Activated B cell treated with CpG ODN at 0.5 μM for 24 hours (primary cell): ENCODE measurements at regions of chr1 and their contacts with region 1.

Region 1: GRCh38 chr1:247475793-247476192 is 17.9 kb upstream of the OR2B11 start:
- DNase-seq: no peak
- ATAC-seq: no peak
- H3K4me3 Mint-ChIP-seq: no peak overlapping the region
- H3K27ac Mint-ChIP-seq: peak overlapping the region; percentile 95
- H3K4me1 Mint-ChIP-seq: peaks cover 40% of the 10 kb centered on the region
- H3K27me3 Mint-ChIP-seq: no peaks in the 10 kb centered on the region
- CTCF ChIP-seq: no peak

Region 2: DNA sequence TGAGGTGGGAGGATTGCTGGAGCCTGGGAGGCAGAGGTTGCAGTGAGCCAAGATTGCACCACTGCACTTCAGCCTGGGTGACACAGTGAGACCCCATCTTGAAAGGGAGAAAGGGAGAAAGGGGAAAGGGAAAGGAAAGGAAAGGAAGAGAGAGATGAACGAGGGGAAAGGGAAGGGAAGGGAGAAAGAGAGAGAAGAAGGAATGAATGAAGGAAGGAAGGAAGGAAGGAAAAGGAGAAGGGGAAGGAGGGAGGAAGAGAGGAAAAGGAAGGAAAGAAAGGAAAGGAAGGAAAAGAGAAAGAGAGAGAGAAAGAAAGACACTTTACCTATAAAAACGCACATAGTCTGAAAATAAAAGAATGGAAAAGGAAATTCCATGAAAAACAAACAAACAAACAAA is 485.9 kb before region 1 on chr1:
- CTCF ChIA-PET with region 1: no interaction called
- POLR2A ChIA-PET with region 1: no interaction called
- intact Hi-C with region 1: no loop called
- DNase-seq: no peak
- ATAC-seq: no peak
- H3K4me3 Mint-ChIP-seq: no peak overlapping the region
- H3K27ac Mint-ChIP-seq: no peak overlapping the region
- H3K4me1 Mint-ChIP-seq: no peaks in the 10 kb centered on the region
- H3K27me3 Mint-ChIP-seq: no peaks in the 10 kb centered on the region
- CTCF ChIP-seq: no peak

Region 3: DNA sequence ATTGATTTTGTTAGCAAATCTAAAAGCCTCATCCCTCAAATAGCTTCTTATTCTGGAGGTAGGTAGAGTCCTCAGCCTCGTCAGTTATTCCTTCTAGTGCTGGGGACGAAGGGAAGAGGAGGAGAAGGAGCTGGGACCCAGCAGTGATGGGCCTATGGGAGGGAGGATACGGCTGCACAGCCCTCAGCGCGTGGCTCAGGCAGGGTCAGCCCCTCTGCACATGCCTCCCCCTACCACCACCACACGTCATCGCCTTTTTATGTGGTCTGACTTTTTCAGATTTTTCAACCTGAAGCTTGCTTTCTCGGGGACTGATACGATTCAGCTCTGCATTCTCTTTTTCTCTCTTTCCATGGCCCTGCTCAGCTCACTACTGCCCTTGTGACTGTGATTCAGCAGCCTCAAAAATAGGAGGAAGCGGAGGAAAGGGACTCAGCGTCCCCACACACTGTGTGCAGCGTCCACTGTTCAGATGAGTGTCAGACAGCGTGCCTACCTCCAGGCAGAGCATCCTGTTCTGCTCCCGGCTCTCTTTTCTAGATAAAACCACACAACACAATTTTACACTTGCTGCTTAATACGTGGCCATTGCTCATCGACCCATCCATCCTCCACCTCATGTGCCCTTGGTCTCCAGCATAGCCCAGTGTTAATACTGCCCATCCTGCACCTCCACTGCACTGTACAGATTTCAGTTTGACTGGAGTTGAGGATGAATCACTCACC is 18.7 kb before region 1 on chr1:
- CTCF ChIA-PET with region 1: no interaction called
- POLR2A ChIA-PET with region 1: no interaction called
- intact Hi-C with region 1: no loop called
- DNase-seq: no peak
- ATAC-seq: no peak
- H3K4me3 Mint-ChIP-seq: no peak overlapping the region
- H3K27ac Mint-ChIP-seq: no peak overlapping the region
- H3K4me1 Mint-ChIP-seq: no peaks in the 10 kb centered on the region
- H3K27me3 Mint-ChIP-seq: peaks cover 12% of the 10 kb centered on the region
- CTCF ChIP-seq: no peak

Region 4: GRCh38 chr1:247487057-247487456 is 11.3 kb after region 1 on chr1:
- CTCF ChIA-PET with region 1: interaction called, 22 read pairs
- POLR2A ChIA-PET with region 1: no interaction called
- intact Hi-C with region 1: loop called (anchors 1 kb)
- DNase-seq: peak; percentile 17
- ATAC-seq: peak; percentile 81
- H3K4me3 Mint-ChIP-seq: no peak overlapping the region
- H3K27ac Mint-ChIP-seq: no peak overlapping the region
- H3K4me1 Mint-ChIP-seq: no peaks in the 10 kb centered on the region
- H3K27me3 Mint-ChIP-seq: peaks cover 6% of the 10 kb centered on the region
- CTCF ChIP-seq: peak; percentile 55